Right ventricle myocardium superior (tissue), 1 donor: ENCODE measurements at regions of chr5 and their contacts with region 1.

Region 1: GRCh38 chr5:62448528-62448927 is 36.0 kb downstream of the IPO11 start:
- DNase-seq: no peak
- ATAC-seq: no peak

Region 2: DNA sequence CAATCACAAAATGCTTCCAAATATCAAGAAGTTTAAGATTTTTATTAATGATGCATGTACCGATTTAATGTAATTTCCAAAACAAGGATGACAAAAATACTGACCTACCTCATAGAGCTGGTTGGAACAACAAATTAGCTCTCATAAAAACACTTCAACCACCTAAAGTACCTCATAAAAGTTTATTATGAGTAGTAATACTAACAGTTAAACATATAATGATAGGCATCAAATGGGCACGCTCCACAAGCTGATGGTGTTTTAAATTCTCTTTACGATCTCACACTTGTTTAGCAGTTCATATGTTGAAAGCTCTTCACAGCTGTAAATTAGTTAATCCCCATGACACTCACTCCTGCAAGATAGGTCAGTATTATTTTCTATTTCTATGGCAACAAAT is 292.5 kb before region 1 on chr5:
- intact Hi-C with region 1: no loop called
- DNase-seq: no peak
- ATAC-seq: no peak

Region 3: DNA sequence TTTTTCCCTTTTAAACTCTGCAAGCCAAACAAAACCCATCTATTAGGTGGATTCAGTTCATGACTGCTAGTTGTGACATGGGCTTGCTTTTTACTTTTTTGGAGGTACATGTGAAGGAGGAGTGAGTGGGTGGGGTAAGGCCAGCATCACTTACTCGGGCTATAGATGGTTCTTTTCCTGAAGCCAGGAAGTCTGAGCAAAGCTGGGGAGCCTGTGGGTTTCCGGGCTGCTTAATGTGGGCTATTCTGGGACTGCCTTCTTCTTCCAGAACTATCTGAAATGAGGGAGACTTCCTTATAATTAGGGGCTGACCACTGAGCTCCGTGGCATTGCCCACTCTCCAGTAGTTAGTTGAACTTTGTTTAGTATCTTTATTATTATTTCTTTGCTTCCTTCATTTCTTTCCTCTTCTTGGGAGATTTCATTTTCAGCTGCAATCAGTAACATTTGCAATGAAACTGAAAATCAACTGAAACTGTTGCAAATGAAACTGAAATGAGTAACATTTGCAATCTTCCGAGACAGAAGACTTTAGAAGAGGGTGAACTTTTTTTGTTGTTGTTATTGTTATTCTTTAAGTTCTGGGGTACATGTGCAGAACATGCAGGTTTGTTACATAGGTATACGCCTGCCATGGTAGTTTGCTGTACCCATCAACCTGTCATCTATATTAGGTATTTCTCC is 335.0 kb after region 1 on chr5:
- intact Hi-C with region 1: loop called (anchors 5 kb)
- DNase-seq: no peak
- ATAC-seq: no peak